Pancreas (tissue), 10 donors: ENCODE measurements at regions of chr2 and their contacts with region 1.

Region 1: DNA sequence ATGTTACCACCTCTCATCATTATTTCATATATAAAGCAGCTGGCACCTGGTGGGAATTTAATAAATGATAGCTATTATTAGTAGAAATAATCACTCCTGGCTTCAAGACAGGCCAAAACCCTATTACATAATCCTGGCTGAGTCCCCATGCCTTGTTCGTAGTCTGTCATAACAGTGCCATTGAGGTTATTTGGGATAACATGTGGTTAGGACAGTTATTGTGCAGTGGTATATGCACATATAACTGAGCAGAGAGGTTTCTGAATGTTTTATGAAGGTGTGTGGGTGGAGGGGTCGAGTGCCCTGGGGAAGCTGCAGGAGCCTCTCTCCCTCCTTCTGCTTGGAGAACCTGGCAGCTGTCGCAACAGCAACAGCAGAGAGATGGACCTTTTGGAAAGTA is 162.4 kb upstream of the NABP1 start:
- DNase-seq: no peak
- ATAC-seq: no peak
- H3K4me3 ChIP-seq: no peak overlapping the region
- H3K27ac ChIP-seq: no peak overlapping the region
- H3K4me1 ChIP-seq: no peaks in the 10 kb centered on the region
- H3K27me3 ChIP-seq: no peaks in the 10 kb centered on the region
- CTCF ChIP-seq: no peak

Region 2: DNA sequence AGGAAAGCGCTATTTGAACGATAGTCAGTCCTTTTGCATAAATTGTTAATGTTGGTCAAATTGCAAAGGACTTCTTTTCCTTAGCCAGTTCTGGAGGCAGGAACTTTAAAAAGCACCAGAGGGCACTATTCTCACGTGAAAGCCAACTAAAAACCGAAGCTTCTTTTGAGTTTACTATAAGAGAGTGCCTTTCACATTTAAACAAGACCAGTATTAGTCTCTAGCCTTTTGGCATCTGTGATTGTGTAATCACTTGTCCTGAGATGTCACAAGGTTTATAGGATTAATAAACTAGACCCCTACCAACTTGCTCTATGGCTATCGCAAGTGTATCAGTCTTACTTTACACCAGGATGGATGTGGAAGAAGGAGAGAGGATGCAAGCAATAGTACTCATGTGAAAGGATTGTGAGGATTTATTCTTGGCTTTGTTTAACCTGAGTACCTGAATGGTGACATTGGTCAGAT is 350.3 kb before region 1 on chr2:
- intact Hi-C with region 1: loop called in 2 of 3 experiments (anchors 5 to 10 kb)
- DNase-seq: no peak
- ATAC-seq: peak; percentile 81 to 90 (median 88)
- H3K4me3 ChIP-seq: no peak overlapping the region
- H3K27ac ChIP-seq: peak overlapping the region in 1 of 4 donors; percentile 45
- H3K4me1 ChIP-seq: peaks cover 0 to 21% (median 8%) of the 10 kb centered on the region in 3 donors
- H3K27me3 ChIP-seq: no peaks in the 10 kb centered on the region
- CTCF ChIP-seq: peak; percentile 14 to 50 (median 40)